ENCODE measurements at regions of chr11 and their contacts with region 1.

Region 1: DNA sequence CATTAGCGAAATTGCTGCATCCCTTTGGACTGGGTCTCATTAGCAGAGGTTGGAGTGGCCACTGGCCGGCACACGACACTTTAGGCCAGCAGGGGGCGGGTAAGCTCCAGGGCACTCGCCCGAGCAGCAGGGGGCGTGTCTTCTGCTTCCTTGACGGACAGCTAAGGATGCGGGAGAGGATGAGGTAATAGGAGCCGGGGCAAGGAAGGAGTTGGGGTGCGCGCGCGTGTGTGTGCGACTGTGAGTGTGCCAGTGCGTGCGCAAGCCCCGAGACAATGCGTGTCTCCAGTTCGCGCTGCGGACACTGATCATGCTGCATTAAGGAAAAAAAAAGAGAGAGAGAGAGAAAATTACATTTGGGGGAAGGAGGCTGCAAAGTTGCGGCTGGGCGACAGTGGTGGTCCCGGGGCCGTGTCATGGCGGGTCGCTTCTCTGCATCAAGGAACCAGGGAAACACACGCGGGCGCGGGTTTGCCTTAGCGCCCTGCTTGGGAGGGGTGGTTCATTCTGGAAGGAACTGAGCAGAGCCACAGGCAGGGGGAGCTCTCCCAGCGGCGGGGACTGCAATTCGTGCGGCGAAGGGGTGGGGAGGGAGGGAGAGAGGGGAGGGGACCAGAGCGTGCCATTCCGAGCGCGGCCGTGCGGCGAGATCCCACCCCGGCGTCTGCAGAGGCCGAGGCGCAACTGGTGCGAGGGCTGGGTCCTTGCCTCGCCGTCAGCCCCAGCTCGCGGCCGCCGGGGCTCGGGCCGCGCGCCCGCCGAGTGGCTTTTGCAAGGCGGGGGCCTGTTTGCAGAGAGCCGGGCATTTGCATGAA is at the start of gene DTX4:
- DNase-seq: peak; percentile 95
- ATAC-seq: peak; percentile 86
- H3K4me3 Mint-ChIP-seq: peak within 1 kb of the TSS; percentile 70
- H3K27ac Mint-ChIP-seq: no peak within 1 kb of the TSS
- H3K4me1 Mint-ChIP-seq: peaks cover 17% of the 10 kb centered on the region
- H3K27me3 Mint-ChIP-seq: peaks cover 14% of the 10 kb centered on the region
- total RNA-seq, gene DTX4: 0.07 to 0.11 TPM

Region 2: DNA sequence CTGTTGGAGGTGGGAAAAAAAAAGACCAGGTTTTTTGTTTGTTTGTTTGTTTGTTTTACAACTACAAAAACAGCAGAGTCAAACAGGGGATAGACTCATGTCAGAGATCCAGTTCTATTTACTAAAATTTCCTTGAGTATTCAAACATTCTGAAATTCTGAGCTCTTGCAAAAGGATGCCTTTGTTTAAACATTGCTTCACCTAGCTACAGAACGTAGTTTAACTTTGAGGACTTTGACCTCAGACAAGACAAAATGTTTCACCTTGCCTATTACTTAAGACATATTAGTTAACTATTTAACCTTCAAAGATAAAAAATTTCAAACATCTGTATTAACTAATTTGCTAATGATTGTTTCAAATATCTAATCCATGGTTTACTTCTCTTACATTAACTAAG is 291.1 kb before region 1 on chr11:
- CTCF ChIA-PET with region 1: no interaction called
- POLR2A ChIA-PET with region 1: no interaction called
- intact Hi-C with region 1: no loop called
- DNase-seq: no peak
- ATAC-seq: no peak
- H3K4me3 Mint-ChIP-seq: no peak overlapping the region
- H3K27ac Mint-ChIP-seq: no peak overlapping the region
- H3K4me1 Mint-ChIP-seq: no peaks in the 10 kb centered on the region
- H3K27me3 Mint-ChIP-seq: peaks cover 13% of the 10 kb centered on the region

Region 3: DNA sequence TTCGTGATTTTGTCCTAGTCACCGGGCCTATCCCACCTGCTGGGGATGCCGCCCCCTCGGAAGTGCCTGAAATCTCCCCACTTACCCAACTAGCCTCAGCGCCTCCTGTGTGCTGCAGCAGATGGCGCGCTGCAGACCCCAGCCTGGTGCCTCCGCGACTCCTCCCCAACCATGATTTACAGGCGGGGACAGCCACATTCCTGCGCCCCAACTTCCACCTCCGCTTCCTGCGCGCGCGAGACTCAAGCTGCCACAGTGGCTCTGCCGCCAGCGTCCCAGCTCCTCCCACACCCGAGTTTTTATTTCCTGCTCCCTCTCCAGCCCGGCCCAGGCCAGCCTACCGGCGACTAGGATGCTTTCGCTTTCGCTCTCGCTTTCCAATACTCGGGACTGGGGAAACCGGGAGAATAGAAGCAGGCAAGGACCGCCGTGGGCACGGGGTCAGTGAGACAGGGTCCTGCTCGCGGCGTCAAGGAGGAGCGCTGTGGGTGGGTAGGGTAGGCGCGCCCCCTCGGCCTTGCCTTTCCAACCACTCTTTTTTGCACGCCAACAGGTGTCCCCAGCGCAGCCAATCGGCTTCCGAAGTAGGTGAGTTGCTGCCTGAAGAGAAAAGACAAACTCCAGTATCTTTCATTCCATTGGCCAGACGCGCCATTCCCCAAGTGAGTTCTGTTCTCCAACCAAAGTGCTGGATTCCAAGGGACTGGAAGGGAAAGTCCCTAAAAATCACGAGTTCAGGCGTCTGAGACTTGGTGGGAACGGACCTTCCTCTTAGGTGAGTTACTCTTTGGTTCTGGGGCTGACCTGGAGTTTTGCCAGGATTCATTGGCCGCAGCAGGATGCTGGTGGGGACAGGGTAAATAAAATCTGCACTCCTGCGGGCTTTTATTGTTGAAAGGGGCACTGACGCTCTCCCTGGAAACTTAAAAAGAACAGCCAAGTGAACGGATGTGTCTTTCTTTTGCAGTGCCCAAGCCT is 28.9 kb before region 1 on chr11 and contains the start of gene FAM111A:
- CTCF ChIA-PET with region 1: interaction called, 13 read pairs
- POLR2A ChIA-PET with region 1: no interaction called
- intact Hi-C with region 1: loop called in 1 of 2 experiments (anchors 1 kb)
- DNase-seq: peak; percentile 90
- ATAC-seq: peak; percentile 77
- H3K4me3 Mint-ChIP-seq: peak within 1 kb of the TSS; percentile 91
- H3K27ac Mint-ChIP-seq: peak within 1 kb of the TSS; percentile 93
- H3K4me1 Mint-ChIP-seq: peaks cover 47% of the 10 kb centered on the region
- H3K27me3 Mint-ChIP-seq: no peaks in the 10 kb centered on the region
- total RNA-seq, gene FAM111A: 87.9 to 135 TPM

Region 4: GRCh38 chr11:59186130-59186594 is 14.4 kb after region 1 on chr11:
- CTCF ChIA-PET with region 1: interaction called, 115 read pairs
- POLR2A ChIA-PET with region 1: interaction called, 15 read pairs
- intact Hi-C with region 1: loop called (anchors 1 kb)
- DNase-seq: peak; percentile 75
- ATAC-seq: peak; percentile 85
- H3K4me3 Mint-ChIP-seq: no peak overlapping the region
- H3K27ac Mint-ChIP-seq: no peak overlapping the region
- H3K4me1 Mint-ChIP-seq: no peaks in the 10 kb centered on the region
- H3K27me3 Mint-ChIP-seq: no peaks in the 10 kb centered on the region

Region 5: DNA sequence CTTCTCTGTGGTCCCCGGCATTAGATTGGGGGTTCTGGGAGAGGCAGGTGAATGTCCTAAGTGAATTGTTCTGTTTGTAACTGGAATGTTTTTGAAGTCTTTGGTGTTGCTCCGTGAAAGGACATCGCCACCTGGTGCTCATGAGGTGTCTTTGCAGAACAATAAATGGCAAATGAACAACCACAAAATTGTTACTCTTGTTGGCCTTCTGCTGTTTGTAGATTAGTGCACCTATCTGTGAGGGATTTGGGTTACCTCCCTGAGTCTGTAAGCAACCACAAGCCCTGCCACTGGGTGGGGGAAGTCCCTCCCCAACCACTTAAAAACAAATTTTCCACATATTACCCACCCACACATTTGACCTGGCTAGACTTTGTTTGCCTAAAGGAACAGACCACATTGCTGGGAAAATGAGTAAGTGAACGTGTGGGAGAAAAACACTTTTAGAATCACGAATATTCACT is 36.3 kb after region 1 on chr11:
- CTCF ChIA-PET with region 1: interaction called, 48 read pairs
- POLR2A ChIA-PET with region 1: no interaction called
- intact Hi-C with region 1: loop called (anchors 1 kb)
- DNase-seq: peak; percentile 52
- ATAC-seq: peak; percentile 78
- H3K4me3 Mint-ChIP-seq: no peak overlapping the region
- H3K27ac Mint-ChIP-seq: peak overlapping the region; percentile 17
- H3K4me1 Mint-ChIP-seq: peaks cover 32% of the 10 kb centered on the region
- H3K27me3 Mint-ChIP-seq: peaks cover 22% of the 10 kb centered on the region

Region 6: GRCh38 chr11:59560702-59561469 is 389.2 kb after region 1 on chr11:
- CTCF ChIA-PET with region 1: no interaction called
- POLR2A ChIA-PET with region 1: no interaction called
- intact Hi-C with region 1: loop called in 1 of 2 experiments (anchors 2 kb)
- DNase-seq: peak; percentile 93
- ATAC-seq: peak; percentile 45
- H3K4me3 Mint-ChIP-seq: peak overlapping the region; percentile 93
- H3K27ac Mint-ChIP-seq: peak overlapping the region; percentile 96
- H3K4me1 Mint-ChIP-seq: peaks cover 41% of the 10 kb centered on the region
- H3K27me3 Mint-ChIP-seq: peaks cover 2% of the 10 kb centered on the region